A673 (cell line): ENCODE measurements at regions of chr7 and their contacts with region 1.

Region 1: DNA sequence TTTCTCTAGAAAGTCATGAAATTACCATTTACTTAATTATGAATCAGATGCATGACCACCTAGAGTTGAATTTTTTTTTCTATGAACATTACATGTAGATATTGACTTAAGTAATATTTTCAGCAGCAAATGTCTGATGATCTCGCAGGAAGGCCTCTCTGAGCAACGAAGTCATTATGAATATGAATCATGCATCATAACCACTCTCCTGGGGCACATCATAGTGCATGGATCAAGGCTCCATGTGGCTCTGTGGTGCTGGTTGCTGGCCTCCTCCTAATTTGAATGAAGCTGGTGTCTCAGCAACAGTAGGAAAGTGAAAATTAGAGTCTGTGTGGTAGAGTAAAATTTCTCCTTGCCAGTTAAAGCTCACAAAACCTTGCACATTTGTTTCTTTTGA is 121.4 kb upstream of the INHBA start:
- DNase-seq: peak; percentile 48
- H3K4me3 ChIP-seq: no peak overlapping the region
- H3K27ac ChIP-seq: peak overlapping the region; percentile 97
- H3K4me1 ChIP-seq: peaks cover 59% of the 10 kb centered on the region
- H3K27me3 ChIP-seq: no peaks in the 10 kb centered on the region
- CTCF ChIP-seq: no peak

Region 2: GRCh38 chr7:41886262-41886900 is 62.1 kb after region 1 on chr7:
- CTCF ChIA-PET with region 1: no interaction called
- POLR2A ChIA-PET with region 1: no interaction called
- intact Hi-C with region 1: loop called (anchors 2 kb)
- DNase-seq: peak; percentile 93
- H3K4me3 ChIP-seq: no peak overlapping the region
- H3K27ac ChIP-seq: peak overlapping the region; percentile 65
- H3K4me1 ChIP-seq: peaks cover 46% of the 10 kb centered on the region
- H3K27me3 ChIP-seq: no peaks in the 10 kb centered on the region
- CTCF ChIP-seq: no peak

Region 3: DNA sequence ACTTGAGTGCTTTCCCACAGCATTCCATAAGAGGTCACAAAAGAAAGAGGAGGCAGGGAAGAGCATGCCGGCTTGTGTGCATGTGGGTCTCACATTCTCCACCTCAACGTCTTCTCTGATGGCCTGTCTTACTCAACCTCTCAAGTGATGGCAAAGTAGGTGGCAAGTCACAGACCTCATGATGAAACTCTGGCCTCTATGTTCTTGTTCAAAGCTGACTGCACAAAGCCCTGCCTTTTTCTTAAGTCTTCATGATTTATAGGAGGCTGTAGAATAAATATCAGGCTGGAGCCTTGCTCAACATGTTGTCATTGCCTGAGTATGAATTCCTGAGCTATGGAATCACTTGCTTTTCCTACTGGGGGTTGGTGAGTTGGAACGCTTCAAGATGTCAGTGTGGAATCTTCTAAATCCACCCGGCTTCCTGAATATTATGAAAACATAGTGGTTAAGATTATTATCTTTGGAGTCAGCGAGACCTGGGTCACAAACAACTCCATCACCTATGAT is 92.2 kb after region 1 on chr7:
- CTCF ChIA-PET with region 1: no interaction called
- POLR2A ChIA-PET with region 1: no interaction called
- intact Hi-C with region 1: loop called (anchors 5 kb)
- DNase-seq: peak; percentile 44
- H3K4me3 ChIP-seq: no peak overlapping the region
- H3K27ac ChIP-seq: no peak overlapping the region
- H3K4me1 ChIP-seq: peaks cover 4% of the 10 kb centered on the region
- H3K27me3 ChIP-seq: no peaks in the 10 kb centered on the region
- CTCF ChIP-seq: no peak

Region 4: GRCh38 chr7:42025635-42026375 is 201.5 kb after region 1 on chr7:
- CTCF ChIA-PET with region 1: no interaction called
- POLR2A ChIA-PET with region 1: no interaction called
- intact Hi-C with region 1: no loop called
- DNase-seq: no peak
- H3K4me3 ChIP-seq: no peak overlapping the region
- H3K27ac ChIP-seq: no peak overlapping the region
- H3K4me1 ChIP-seq: peaks cover 12% of the 10 kb centered on the region
- H3K27me3 ChIP-seq: no peaks in the 10 kb centered on the region
- CTCF ChIP-seq: 0 out of 2 replicates have a peak, but pooled peaks have one; percentile 10

Region 5: DNA sequence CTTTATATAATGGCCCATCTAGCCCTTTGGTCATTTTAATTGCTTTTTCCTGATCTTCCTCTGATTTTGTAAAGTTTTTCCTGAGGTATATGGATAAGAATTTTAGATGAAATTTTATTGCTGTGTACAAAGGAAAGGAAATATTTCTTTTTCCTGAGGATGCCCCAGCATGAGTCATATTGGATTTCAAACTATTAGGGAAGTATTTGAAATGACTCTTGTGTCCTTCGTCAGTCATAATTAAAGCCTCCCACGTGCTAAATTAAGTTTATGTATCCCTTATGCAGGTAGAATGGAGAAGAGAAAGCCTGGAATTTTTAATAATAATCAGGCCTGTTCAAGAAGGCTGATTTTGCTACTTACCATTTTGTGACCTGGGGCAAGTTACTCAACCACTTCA is 495.3 kb after region 1 on chr7:
- CTCF ChIA-PET with region 1: no interaction called
- POLR2A ChIA-PET with region 1: no interaction called
- intact Hi-C with region 1: loop called (anchors 10 kb)
- DNase-seq: peak; percentile 48
- H3K4me3 ChIP-seq: no peak overlapping the region
- H3K27ac ChIP-seq: no peak overlapping the region
- H3K4me1 ChIP-seq: peaks cover 27% of the 10 kb centered on the region
- H3K27me3 ChIP-seq: no peaks in the 10 kb centered on the region
- CTCF ChIP-seq: no peak